CD4-positive, alpha-beta memory T cell (primary cell): ENCODE measurements at regions of chr1 and their contacts with region 1.

Region 1: DNA sequence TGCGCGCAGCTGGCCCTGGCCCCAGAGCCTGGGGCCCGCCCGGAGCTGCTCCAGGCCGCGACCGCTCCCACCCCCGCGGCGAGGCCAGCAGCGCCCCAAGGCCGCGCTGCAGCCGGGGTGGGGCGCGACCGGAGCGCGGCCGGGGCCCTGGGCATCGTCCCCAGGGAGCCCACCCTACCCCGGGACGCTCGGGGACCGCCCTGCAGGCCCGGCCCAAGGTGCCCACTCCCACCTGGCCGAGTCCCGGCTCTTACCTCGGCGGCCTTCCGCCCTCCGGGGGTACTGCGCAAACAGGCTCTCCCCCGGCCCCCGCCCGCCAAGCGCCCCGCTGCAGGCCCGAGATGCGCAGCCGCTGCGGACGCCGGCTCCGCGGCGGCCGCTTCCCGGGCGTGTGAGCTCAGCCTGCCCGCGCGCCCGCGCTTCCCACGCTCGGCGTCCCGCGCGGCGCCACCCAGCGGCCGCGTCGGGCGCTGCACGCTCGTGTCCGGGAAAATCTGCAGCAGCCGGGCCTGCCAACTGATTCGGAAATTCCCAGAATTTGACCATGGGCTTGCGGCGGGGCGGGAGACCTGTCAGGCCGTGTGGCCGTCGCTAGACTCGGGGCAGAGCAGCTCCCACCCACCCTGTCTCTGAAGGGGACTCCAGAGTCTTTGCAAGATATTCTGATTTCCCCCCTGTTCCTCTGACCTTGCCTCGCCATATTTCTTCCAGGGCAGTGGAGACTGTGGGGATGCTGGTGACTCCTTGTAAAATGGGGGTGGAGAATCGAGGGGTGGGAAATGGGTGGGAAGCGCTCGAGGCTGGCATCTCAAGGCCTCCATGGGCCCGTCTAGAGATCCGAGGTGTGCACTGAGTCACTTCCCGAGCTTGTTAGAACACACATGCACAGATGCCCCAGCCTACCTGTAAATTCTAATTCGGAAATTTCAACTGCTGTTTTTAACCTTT is 41.9 kb downstream of the CD34 start:
- DNase-seq: peak; percentile 66 to 82 (median 78)
- H3K4me3 ChIP-seq: peak overlapping the region in 1 of 2 donors; percentile 79
- H3K4me3 Mint-ChIP-seq: peak overlapping the region; percentile 91 to 98 (median 96)
- H3K27ac ChIP-seq: peak overlapping the region; percentile 81
- H3K27ac Mint-ChIP-seq: peak overlapping the region; percentile 68 to 98 (median 94)
- H3K4me1 ChIP-seq: peaks cover 87% of the 10 kb centered on the region
- H3K4me1 Mint-ChIP-seq: peaks cover 74 to 94% (median 80%) of the 10 kb centered on the region in 4 donors
- H3K27me3 ChIP-seq: no peaks in the 10 kb centered on the region
- H3K27me3 Mint-ChIP-seq: no peaks in the 10 kb centered on the region

Region 2: DNA sequence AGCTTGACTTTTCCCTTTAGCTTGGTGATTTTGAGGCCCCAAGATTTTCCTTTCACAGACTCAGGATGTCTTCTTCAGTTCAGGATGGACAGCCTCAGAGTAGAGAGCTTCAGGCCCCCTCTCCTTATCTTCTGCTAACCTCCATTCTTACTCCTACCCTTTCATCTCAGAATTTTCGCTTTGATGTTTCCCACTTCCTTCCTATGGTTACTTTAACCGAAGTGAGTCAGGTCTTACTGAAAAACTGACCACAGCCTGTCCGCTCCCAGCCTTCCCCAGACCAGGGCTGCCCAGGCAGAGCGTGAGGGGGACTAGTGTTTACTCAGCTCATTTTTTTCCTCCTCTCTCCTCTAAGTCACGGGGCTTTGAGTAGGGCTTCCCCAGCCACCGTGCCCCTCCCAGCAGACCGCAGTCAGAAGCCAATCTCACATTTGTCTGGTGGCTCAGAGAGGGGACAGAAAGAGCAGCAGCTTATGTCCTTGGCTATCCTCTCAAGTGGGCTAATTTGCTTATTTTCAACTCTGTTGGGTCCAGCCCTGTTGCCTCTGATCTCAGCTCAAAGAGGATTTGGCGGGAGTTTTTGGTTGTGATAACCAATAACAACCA is 1102.7 kb before region 1 on chr1:
- CTCF ChIA-PET with region 1: no interaction called
- POLR2A ChIA-PET with region 1: no interaction called
- intact Hi-C with region 1: no loop called
- DNase-seq: peak; percentile 67 to 85 (median 74)
- H3K4me3 ChIP-seq: no peak overlapping the region
- H3K4me3 Mint-ChIP-seq: peak overlapping the region; percentile 61 to 82 (median 76)
- H3K27ac ChIP-seq: no peak overlapping the region
- H3K27ac Mint-ChIP-seq: peak overlapping the region; percentile 82 to 95 (median 91)
- H3K4me1 ChIP-seq: peaks cover 67% of the 10 kb centered on the region
- H3K4me1 Mint-ChIP-seq: peaks cover 48 to 72% (median 61%) of the 10 kb centered on the region in 4 donors
- H3K27me3 ChIP-seq: no peaks in the 10 kb centered on the region
- H3K27me3 Mint-ChIP-seq: no peaks in the 10 kb centered on the region

Region 3: DNA sequence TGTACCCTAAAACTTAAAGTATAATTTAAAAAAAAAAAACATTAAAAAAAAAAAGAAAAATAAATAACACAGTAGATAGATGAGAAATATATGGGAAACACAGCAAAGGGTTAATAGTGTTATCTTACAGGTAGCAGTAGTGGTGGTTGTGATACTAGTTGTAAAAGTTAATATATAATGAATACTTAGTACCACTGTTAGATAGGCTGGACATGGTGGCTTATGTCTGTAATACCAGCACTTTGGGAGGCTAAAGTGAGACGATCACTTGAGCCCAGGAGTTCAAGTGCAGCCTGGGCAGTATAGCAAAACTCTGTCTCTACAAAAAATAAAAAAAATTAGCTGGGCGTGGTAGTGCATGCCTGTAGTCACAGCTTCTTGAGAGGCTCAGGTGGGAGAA is 149.8 kb before region 1 on chr1:
- CTCF ChIA-PET with region 1: no interaction called
- POLR2A ChIA-PET with region 1: no interaction called
- intact Hi-C with region 1: no loop called
- DNase-seq: no peak
- H3K4me3 ChIP-seq: no peak overlapping the region
- H3K4me3 Mint-ChIP-seq: no peak overlapping the region
- H3K27ac ChIP-seq: no peak overlapping the region
- H3K27ac Mint-ChIP-seq: no peak overlapping the region
- H3K4me1 ChIP-seq: no peaks in the 10 kb centered on the region
- H3K4me1 Mint-ChIP-seq: no peaks in the 10 kb centered on the region
- H3K27me3 ChIP-seq: no peaks in the 10 kb centered on the region
- H3K27me3 Mint-ChIP-seq: peaks cover 0 to 2% of the 10 kb centered on the region in 2 donors

Region 4: DNA sequence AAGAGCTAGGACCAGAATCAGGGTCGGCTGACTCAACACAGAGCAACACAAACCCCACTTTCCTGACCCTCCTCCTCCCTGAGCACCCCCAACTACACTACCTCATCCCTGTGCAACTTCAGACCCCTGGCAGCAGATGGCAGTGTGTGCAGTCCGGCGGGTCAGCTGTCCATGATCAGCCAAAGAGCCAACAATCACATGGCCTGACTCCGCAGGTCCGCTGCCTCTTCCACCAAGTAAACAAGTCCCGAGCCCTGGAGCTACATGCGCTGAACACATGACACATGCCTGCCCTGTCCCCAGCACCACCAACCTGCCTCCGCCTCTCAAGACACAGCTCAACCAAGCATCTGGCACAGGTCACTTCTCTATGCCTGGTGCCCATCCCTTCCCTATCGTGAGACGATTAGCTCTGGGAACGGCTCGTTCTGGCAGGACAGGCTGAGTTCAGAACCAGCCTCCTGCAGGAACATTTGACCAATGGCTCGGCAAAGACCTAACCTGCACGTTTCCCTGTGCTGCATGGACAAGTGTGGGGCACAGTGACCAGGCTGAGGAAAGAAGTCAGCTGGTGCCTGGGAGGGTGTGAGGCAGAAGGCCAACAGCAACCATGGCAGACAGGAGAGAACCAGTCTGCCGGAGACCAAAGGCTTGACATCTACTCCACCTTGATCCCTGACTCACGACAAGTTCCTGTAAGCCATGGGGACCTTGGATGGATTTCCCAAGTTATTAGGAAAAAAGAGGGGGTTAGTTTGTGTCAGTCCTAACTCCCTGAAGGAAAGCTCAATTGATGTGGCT is 56.9 kb before region 1 on chr1:
- CTCF ChIA-PET with region 1: interaction called, 14 read pairs
- POLR2A ChIA-PET with region 1: interaction called, 8 read pairs
- intact Hi-C with region 1: no loop called
- DNase-seq: no peak
- H3K4me3 ChIP-seq: no peak overlapping the region
- H3K4me3 Mint-ChIP-seq: peak overlapping the region in 1 of 8 donors; percentile 17
- H3K27ac ChIP-seq: no peak overlapping the region
- H3K27ac Mint-ChIP-seq: peak overlapping the region in 6 of 7 donors; percentile 13 to 85 (median 61)
- H3K4me1 ChIP-seq: peaks cover 75% of the 10 kb centered on the region
- H3K4me1 Mint-ChIP-seq: peaks cover 51 to 90% (median 74%) of the 10 kb centered on the region in 4 donors
- H3K27me3 ChIP-seq: no peaks in the 10 kb centered on the region
- H3K27me3 Mint-ChIP-seq: no peaks in the 10 kb centered on the region

Region 5: GRCh38 chr1:207838156-207839082 is 30.6 kb before region 1 on chr1:
- CTCF ChIA-PET with region 1: interaction called, 494 read pairs
- POLR2A ChIA-PET with region 1: interaction called, 374 read pairs
- intact Hi-C with region 1: no loop called
- DNase-seq: no peak
- H3K4me3 ChIP-seq: no peak overlapping the region
- H3K4me3 Mint-ChIP-seq: peak overlapping the region in 1 of 8 donors; percentile 7
- H3K27ac ChIP-seq: no peak overlapping the region
- H3K27ac Mint-ChIP-seq: peak overlapping the region; percentile 34 to 89 (median 79)
- H3K4me1 ChIP-seq: peaks cover 87% of the 10 kb centered on the region
- H3K4me1 Mint-ChIP-seq: peaks cover 64 to 91% (median 80%) of the 10 kb centered on the region in 4 donors
- H3K27me3 ChIP-seq: no peaks in the 10 kb centered on the region
- H3K27me3 Mint-ChIP-seq: no peaks in the 10 kb centered on the region

Region 6: GRCh38 chr1:207853372-207853757 is 15.7 kb before region 1 on chr1:
- CTCF ChIA-PET with region 1: interaction called, 19 read pairs
- POLR2A ChIA-PET with region 1: interaction called, 18 read pairs
- intact Hi-C with region 1: loop called (anchors 2 kb)
- DNase-seq: no peak
- H3K4me3 ChIP-seq: no peak overlapping the region
- H3K4me3 Mint-ChIP-seq: peak overlapping the region in 7 of 8 donors; percentile 0 to 85 (median 43)
- H3K27ac ChIP-seq: no peak overlapping the region
- H3K27ac Mint-ChIP-seq: peak overlapping the region in 6 of 7 donors; percentile 39 to 87 (median 51)
- H3K4me1 ChIP-seq: peaks cover 95% of the 10 kb centered on the region
- H3K4me1 Mint-ChIP-seq: peaks cover 72 to 91% (median 81%) of the 10 kb centered on the region in 4 donors
- H3K27me3 ChIP-seq: no peaks in the 10 kb centered on the region
- H3K27me3 Mint-ChIP-seq: no peaks in the 10 kb centered on the region

Region 7: DNA sequence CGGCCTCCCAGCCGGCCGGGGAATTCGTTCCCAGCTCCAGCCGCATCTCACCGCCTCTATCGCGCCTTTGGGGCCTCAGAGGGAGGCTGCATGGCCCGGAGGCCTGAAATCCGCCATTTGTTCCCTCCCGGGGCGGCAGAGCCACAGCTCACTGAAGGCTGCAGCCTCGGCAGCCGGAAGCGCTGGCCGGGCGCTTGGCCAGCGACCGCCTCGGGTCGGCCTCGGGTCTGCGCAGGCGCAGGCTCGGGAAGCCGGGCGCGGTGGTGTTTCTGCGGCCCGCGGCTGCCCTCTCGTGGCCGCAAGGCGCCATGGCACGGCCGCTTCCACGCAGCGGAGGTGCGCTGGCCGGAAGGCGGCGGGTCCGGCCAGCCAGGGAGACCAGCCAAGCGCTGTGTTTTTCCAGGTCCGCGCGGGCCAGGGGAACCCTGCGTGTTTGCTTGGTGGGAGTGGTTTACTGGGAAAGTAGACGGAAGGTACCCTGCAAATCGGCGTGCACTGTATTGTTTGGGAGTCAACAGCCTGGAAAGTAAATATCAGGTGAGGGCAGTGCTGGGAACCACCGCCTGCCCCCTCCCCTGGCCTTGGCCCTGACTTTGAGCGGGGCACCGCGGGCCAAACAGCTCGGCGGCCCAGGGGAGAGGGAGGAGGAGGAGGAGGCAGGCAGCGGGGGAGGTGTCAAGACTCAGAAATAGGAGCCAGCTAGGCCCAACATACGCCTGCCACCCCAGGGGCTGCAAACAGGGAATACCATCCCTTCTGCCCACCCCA is 94.6 kb after region 1 on chr1:
- CTCF ChIA-PET with region 1: interaction called, 27 read pairs
- POLR2A ChIA-PET with region 1: interaction called, 18 read pairs
- intact Hi-C with region 1: no loop called
- DNase-seq: peak; percentile 66 to 85 (median 80)
- H3K4me3 ChIP-seq: peak overlapping the region; percentile 27 to 86
- H3K4me3 Mint-ChIP-seq: peak overlapping the region; percentile 81 to 93 (median 87)
- H3K27ac ChIP-seq: peak overlapping the region; percentile 48
- H3K27ac Mint-ChIP-seq: peak overlapping the region in 2 of 7 donors; percentile 17 to 33
- H3K4me1 ChIP-seq: peaks cover 21% of the 10 kb centered on the region
- H3K4me1 Mint-ChIP-seq: peaks cover 4 to 22% (median 14%) of the 10 kb centered on the region in 4 donors
- H3K27me3 ChIP-seq: peaks cover 14% of the 10 kb centered on the region
- H3K27me3 Mint-ChIP-seq: peaks cover 19 to 27% of the 10 kb centered on the region in 2 donors

Region 8: DNA sequence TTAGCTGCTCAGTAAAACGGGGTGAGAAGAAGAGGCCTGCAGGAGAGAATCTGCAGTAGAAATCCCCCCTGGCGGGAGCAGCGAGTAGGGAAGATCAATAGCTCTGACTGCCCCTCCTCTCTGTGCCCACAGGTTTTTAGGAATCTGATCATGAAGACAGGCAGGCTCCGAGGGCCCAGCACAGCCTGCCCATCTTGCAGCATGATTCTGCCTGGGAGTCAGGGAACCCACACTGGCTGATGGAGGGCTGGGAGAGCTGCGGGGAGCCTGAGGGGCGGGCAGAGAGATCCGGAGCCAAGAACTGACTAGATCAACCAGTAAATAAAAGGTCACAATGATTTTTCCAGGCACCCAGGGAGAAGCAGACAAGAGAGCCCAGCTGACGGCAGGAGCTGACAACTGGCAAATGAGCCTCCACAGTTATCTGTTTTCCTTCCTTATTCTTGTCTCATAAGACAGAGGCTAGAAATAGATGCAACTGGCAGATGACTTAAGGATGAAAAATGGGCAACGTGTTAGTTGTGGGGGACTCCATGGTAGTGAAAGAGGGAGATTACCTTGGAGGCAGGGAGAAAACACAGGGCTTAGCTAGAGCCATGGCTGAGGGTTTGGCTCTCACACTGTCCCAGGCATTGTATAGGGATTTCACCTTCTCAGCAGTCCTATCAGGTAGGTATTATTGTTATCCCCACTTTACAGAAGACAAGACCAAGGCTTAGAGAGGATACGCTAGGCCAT is 258.9 kb after region 1 on chr1:
- CTCF ChIA-PET with region 1: no interaction called
- POLR2A ChIA-PET with region 1: no interaction called
- intact Hi-C with region 1: no loop called
- DNase-seq: no peak
- H3K4me3 ChIP-seq: no peak overlapping the region
- H3K4me3 Mint-ChIP-seq: no peak overlapping the region
- H3K27ac ChIP-seq: no peak overlapping the region
- H3K27ac Mint-ChIP-seq: peak overlapping the region in 1 of 7 donors; percentile 17
- H3K4me1 ChIP-seq: peaks cover 5% of the 10 kb centered on the region
- H3K4me1 Mint-ChIP-seq: peaks cover 2 to 8% (median 6%) of the 10 kb centered on the region in 4 donors
- H3K27me3 ChIP-seq: no peaks in the 10 kb centered on the region
- H3K27me3 Mint-ChIP-seq: peaks cover 10 to 22% of the 10 kb centered on the region in 2 donors